Caco-2 (cell line): ENCODE measurements at regions of chr19 and their contacts with region 1.

Region 1: DNA sequence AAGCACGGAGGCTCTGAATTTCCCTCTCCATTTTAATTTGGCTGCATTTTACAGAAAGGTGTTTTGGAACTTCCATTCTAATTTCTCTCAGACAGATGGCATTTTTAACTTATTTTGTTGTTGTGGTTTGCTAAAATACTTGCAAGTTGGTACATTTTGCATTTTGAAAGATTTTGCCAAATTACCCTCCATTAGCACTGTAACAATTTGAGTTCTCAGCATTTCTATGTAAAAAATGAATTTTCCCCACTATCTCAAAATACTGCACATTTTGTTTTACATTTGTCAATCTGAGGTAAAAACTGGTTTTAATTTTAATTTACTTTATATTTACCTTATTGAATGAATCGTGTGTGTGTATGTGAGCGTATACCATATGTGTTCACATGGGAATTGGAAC is 7.0 kb upstream of the HNRNPL start:
- DNase-seq: no peak
- H3K4me3 ChIP-seq: no peak overlapping the region
- H3K4me3 Mint-ChIP-seq: no peak overlapping the region
- H3K27ac Mint-ChIP-seq: peak overlapping the region; percentile 88
- H3K4me1 ChIP-seq: peaks cover 37% of the 10 kb centered on the region
- H3K4me1 Mint-ChIP-seq: peaks cover 32% of the 10 kb centered on the region
- H3K27me3 ChIP-seq: no peaks in the 10 kb centered on the region
- H3K27me3 Mint-ChIP-seq: no peaks in the 10 kb centered on the region
- CTCF ChIP-seq: no peak

Region 2: DNA sequence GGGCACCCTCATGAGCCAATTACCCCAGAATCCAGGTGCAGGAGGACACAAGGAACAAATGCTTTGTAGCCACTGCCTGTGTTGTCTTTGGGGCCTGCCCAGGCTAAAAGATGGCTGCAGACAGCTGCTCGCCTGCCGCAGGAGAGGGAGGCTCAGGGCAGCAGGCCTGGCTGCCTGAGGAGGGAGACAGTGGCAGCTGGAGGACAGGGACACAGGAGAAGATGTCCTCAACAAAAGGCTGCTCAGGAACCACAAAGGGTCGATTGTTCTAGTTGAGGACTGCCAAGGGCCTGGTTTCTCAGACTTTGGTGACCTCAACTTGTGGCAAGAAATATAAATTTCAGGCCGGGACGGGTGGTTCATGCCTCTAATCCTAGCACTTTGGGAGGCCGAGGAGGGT is 35.0 kb after region 1 on chr19:
- CTCF ChIA-PET with region 1: interaction called, 5 read pairs
- POLR2A ChIA-PET with region 1: interaction called, 3 read pairs
- intact Hi-C with region 1: loop called (anchors 1 kb)
- DNase-seq: no peak
- H3K4me3 ChIP-seq: no peak overlapping the region
- H3K4me3 Mint-ChIP-seq: no peak overlapping the region
- H3K27ac Mint-ChIP-seq: no peak overlapping the region
- H3K4me1 ChIP-seq: peaks cover 6% of the 10 kb centered on the region; the same call in 1 of the 2 replicates
- H3K4me1 Mint-ChIP-seq: no peaks in the 10 kb centered on the region
- H3K27me3 ChIP-seq: no peaks in the 10 kb centered on the region
- H3K27me3 Mint-ChIP-seq: no peaks in the 10 kb centered on the region
- CTCF ChIP-seq: no peak